CD8-positive, alpha-beta T cell (primary cell): ENCODE measurements at regions of chr9 and their contacts with region 1.

Region 1: DNA sequence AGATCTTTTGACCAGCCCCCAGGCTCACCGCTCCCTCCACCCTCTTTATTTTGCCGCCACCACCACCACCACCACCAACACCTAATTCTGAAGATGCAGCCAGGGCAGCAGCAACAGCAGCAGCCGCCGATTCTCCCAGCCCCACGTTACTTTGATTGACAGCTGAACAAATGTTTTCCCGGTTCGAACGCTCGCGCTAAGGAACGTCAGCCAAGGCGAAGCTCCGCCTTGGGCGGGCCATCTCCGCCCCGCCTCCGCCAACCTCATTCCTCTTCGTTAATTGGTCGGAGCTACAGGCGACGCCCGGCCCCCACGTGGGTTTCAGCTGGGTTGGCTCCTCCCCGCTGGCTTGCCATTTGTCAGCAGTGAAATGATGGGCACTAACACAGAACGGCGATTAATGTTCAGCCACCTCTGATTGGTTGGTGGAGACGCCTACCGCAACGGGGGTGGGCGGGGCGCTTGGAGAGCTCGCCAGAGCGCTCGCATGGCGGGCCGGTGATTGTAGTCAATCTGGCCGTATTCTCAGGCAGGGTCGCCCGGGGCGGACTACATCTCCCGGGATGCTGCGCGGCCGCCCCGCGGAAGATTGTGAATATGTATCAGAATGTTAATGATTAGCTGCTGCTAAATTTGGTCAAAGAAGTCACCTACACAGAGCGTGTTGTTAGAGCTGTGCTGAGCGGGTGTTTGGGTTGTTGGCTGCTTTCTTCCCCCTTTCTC is at the start of gene TLE4:
- DNase-seq: peak; percentile 98 to 100 (median 99)
- ATAC-seq: peak; percentile 83
- H3K4me3 ChIP-seq: peak within 1 kb of the TSS; percentile 71 to 72
- H3K4me3 Mint-ChIP-seq: peak within 1 kb of the TSS; percentile 89
- H3K27ac ChIP-seq: peak within 1 kb of the TSS; percentile 86 to 92
- H3K27ac Mint-ChIP-seq: peak within 1 kb of the TSS; percentile 50
- H3K4me1 ChIP-seq: peaks cover 29% of the 10 kb centered on the region
- H3K4me1 Mint-ChIP-seq: peaks cover 31% of the 10 kb centered on the region
- H3K27me3 ChIP-seq: peaks cover 0 to 4% of the 10 kb centered on the region in 2 experiments
- H3K27me3 Mint-ChIP-seq: no peaks in the 10 kb centered on the region
- CTCF ChIP-seq: no peak
- total RNA-seq, gene TLE4: 123 to 124 TPM

Region 2: DNA sequence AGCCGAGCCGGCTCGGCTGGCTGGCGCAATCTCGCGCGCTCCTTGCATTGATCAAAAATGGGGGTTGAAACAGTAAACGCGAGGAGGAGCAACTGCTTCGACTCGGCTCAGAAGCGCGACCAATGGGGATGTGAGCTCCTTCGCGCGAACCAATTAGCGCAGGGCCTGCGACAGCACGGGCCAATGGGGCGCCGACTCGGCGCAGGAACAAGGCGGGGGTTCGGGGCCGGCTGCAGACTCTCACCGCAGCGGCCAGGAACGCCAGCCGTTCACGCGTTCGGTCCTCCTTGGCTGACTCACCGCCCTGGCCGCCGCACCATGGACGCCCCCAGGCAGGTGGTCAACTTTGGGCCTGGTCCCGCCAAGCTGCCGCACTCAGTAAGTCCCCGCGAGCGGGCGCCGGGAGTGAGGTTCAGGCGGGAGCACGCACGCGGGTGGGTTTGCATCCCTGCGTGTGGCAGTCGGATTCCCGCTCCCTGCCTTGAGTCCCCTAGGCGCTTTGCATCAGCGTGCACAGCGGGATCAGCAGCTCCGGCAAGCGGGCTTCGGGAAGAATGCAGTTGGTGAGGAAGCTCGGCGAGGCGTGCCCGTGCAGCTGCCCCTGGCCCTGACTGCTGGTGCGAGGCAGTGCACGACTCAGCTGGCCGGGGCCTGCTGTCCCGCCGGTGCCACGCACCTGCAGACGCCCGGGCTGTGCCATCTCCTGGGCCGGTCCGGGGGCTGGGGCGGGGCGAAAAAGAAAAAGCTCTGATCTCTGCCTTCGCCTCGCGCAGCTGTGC is 1274.4 kb before region 1 on chr9 and contains the start of gene PSAT1:
- CTCF ChIA-PET with region 1: no interaction called
- POLR2A ChIA-PET with region 1: interaction called, 4 read pairs
- intact Hi-C with region 1: loop called in 1 of 2 experiments (anchors 5 kb)
- DNase-seq: peak; percentile 68 to 93 (median 85)
- ATAC-seq: peak; percentile 97
- H3K4me3 ChIP-seq: peak within 1 kb of the TSS; percentile 92 to 99
- H3K4me3 Mint-ChIP-seq: peak within 1 kb of the TSS; percentile 89
- H3K27ac ChIP-seq: peak within 1 kb of the TSS in 1 of 2 experiments; percentile 40
- H3K27ac Mint-ChIP-seq: peak within 1 kb of the TSS; percentile 72
- H3K4me1 ChIP-seq: peaks cover 21% of the 10 kb centered on the region
- H3K4me1 Mint-ChIP-seq: peaks cover 28% of the 10 kb centered on the region
- H3K27me3 ChIP-seq: no peaks in the 10 kb centered on the region
- H3K27me3 Mint-ChIP-seq: no peaks in the 10 kb centered on the region
- CTCF ChIP-seq: no peak
- total RNA-seq, gene PSAT1: 0.53 to 0.98 TPM

Region 3: GRCh38 chr9:79542735-79543620 is 28.5 kb before region 1 on chr9:
- CTCF ChIA-PET with region 1: interaction called, 5 read pairs
- POLR2A ChIA-PET with region 1: interaction called, 18 read pairs
- intact Hi-C with region 1: loop called (anchors 1 to 2 kb)
- DNase-seq: no peak
- ATAC-seq: no peak
- H3K4me3 ChIP-seq: no peak overlapping the region
- H3K4me3 Mint-ChIP-seq: no peak overlapping the region
- H3K27ac ChIP-seq: no peak overlapping the region
- H3K27ac Mint-ChIP-seq: no peak overlapping the region
- H3K4me1 ChIP-seq: peaks cover 14% of the 10 kb centered on the region
- H3K4me1 Mint-ChIP-seq: peaks cover 23% of the 10 kb centered on the region
- H3K27me3 ChIP-seq: no peaks in the 10 kb centered on the region
- H3K27me3 Mint-ChIP-seq: no peaks in the 10 kb centered on the region
- CTCF ChIP-seq: no peak

Region 4: DNA sequence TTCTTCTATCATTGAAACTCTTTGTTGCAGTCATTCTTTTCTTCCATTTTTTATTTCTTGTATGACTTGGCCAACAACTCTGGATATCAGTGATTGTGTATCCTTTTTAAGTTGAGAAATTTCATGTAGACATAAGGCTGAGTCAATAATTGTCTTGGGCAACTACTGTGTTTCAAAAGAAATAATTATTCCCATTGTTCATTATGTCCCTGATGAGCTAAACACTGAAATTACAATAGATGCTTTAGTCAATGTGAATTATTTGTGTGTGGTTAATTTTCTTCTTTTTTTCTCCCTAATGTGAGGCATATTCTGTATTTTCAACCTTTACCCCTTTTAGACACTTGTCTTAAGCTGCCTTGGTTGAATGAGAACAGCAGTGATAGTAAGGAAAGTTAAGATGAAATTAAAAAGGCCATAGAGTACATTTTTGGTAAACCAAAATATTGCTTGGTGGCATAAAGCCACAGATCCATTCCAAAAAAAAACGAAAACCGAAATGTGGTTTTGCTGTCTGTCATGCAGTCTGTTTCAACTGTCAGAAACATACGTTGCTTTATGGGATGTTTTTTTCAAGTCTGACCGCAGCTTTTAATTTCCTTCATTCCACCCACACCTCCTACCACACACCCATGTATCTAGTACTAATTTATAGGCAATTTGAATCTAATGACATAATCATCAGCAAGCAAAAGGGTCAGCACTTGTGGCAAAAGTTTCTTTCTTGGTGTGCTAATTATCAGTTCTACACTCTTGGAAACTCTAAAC is 21.4 kb after region 1 on chr9:
- CTCF ChIA-PET with region 1: no interaction called
- POLR2A ChIA-PET with region 1: interaction called, 8 read pairs
- intact Hi-C with region 1: loop called in 1 of 2 experiments (anchors 1 kb)
- DNase-seq: peak in 2 of 9 experiments; percentile 64 to 78
- ATAC-seq: peak; percentile 85
- H3K4me3 ChIP-seq: no peak overlapping the region
- H3K4me3 Mint-ChIP-seq: peak overlapping the region; percentile 48
- H3K27ac ChIP-seq: no peak overlapping the region
- H3K27ac Mint-ChIP-seq: no peak overlapping the region
- H3K4me1 ChIP-seq: peaks cover 57% of the 10 kb centered on the region
- H3K4me1 Mint-ChIP-seq: peaks cover 81% of the 10 kb centered on the region
- H3K27me3 ChIP-seq: no peaks in the 10 kb centered on the region
- H3K27me3 Mint-ChIP-seq: no peaks in the 10 kb centered on the region
- CTCF ChIP-seq: no peak

Region 5: GRCh38 chr9:79662537-79662956 is 91.1 kb after region 1 on chr9:
- CTCF ChIA-PET with region 1: no interaction called
- POLR2A ChIA-PET with region 1: no interaction called
- intact Hi-C with region 1: loop called in 1 of 2 experiments (anchors 2 kb)
- DNase-seq: peak in 1 of 9 experiments; percentile 35
- ATAC-seq: no peak
- H3K4me3 ChIP-seq: no peak overlapping the region
- H3K4me3 Mint-ChIP-seq: no peak overlapping the region
- H3K27ac ChIP-seq: no peak overlapping the region
- H3K27ac Mint-ChIP-seq: no peak overlapping the region
- H3K4me1 ChIP-seq: no peaks in the 10 kb centered on the region
- H3K4me1 Mint-ChIP-seq: peaks cover 35% of the 10 kb centered on the region
- H3K27me3 ChIP-seq: no peaks in the 10 kb centered on the region
- H3K27me3 Mint-ChIP-seq: no peaks in the 10 kb centered on the region
- CTCF ChIP-seq: no peak

Region 6: DNA sequence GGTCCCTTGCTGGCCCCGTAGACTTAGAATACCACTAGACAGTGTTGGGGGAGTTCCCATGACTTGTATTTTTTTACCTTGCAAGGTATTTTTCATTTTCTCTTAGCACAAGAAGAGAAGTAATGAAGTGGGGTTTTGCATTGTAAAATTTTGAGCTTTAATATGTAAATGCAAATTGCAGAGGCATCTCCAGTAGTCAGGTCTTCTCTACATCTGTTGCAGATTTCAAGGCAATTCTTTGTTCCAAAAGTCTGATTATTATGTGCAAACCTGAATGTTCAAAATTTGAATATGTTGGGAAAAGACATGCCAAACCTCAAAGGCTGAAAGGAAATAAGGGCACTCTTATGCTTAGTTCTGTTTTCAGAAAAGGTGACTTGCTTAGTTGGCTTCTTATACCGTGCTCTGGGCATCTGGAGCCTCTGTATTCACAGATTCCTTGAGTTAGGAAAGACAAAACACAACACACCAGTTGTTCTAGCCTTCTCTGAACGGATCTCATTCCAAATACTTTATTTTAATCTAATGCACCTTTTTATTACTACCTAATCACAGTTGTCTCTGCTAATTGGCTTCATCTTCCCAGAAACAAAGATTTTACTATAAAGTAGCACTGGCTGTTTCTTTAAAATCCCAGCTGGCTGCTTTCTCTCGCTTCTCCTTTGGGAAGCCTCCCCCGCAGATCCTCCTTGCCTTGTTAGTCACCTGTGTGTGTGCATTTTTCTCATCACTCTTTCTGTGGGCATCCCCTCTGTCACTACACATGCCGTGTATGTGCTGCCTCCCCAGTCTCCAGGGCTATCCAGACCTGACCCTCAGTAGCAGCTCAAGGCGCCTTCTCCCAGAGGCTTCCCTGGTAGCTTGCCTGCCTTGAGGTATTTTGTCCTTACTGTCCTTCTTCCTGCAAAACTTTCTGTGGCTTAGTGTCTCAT is 138.5 kb after region 1 on chr9:
- CTCF ChIA-PET with region 1: no interaction called
- POLR2A ChIA-PET with region 1: interaction called, 4 read pairs
- intact Hi-C with region 1: loop called (anchors 5 kb)
- DNase-seq: no peak
- ATAC-seq: no peak
- H3K4me3 ChIP-seq: no peak overlapping the region
- H3K4me3 Mint-ChIP-seq: no peak overlapping the region
- H3K27ac ChIP-seq: no peak overlapping the region
- H3K27ac Mint-ChIP-seq: no peak overlapping the region
- H3K4me1 ChIP-seq: no peaks in the 10 kb centered on the region
- H3K4me1 Mint-ChIP-seq: peaks cover 7% of the 10 kb centered on the region
- H3K27me3 ChIP-seq: no peaks in the 10 kb centered on the region
- H3K27me3 Mint-ChIP-seq: no peaks in the 10 kb centered on the region
- CTCF ChIP-seq: no peak